Ascending aorta (tissue), 2 donors: ENCODE measurements at regions of chr20 and their contacts with region 1.

Region 1: GRCh38 chr20:49541733-49542513 is 26.0 kb downstream of the PTGIS start:
- DNase-seq: peak in 1 of 2 donors; percentile 84
- H3K4me3 ChIP-seq: no peak overlapping the region
- H3K27ac ChIP-seq: peak overlapping the region; percentile 73 to 84
- H3K4me1 ChIP-seq: peaks cover 0 to 15% of the 10 kb centered on the region in 2 donors
- H3K27me3 ChIP-seq: no peaks in the 10 kb centered on the region
- CTCF ChIP-seq: peak; percentile 91 to 96 (median 92)

Region 2: DNA sequence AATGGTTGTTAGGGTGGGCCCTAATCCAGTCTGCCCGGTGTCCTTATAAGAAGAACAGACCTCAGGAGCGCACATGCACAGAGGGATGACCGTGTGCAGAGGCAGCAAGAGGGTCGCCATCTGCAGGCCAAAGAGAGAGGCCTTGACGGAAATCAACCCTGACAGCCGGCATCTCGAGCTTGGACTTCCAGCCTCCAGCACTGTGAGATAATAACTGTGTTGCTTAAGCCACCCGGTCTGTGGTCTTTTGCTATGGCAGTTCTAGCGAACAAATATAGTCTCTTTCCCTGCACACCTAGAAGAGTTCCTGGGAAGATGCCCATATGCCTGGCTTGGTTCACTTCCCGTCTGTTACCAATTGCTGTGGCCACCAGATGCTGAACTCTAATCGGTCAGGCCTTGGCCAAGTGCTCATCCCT is 61.3 kb after region 1 on chr20:
- intact Hi-C with region 1: no loop called
- DNase-seq: no peak
- H3K4me3 ChIP-seq: no peak overlapping the region
- H3K27ac ChIP-seq: peak overlapping the region; percentile 23 to 34
- H3K4me1 ChIP-seq: peaks cover 6 to 15% of the 10 kb centered on the region in 2 donors
- H3K27me3 ChIP-seq: no peaks in the 10 kb centered on the region
- CTCF ChIP-seq: peak in 1 of 3 experiments; percentile 21

Region 3: DNA sequence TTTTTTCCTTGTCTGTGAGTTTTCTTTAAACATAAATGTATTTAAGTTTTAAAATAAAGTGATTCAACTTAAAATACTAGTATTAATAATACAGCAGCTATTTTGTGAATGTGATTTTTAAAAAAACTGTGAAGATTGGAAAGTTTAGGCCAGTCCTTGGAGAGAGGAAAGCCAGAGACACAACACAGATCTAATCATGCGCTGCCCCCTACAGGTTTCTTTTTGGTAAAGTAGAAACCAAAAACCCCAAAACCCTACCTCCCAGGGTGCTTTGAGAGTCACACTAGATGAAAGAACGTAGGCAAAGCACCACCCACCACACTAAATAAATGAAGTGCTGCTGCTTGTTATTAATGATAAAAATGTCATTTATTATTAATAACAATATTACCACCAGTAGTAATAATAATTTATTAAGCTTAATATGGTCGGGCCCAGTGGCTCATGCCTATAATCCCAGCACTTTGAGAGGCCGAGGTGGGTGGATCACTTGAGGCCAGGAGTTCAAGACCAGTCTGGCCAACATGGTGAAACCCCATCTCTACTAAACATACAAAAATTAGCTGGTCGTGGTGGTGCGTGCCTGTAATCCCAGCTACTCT is 304.4 kb after region 1 on chr20:
- intact Hi-C with region 1: loop called (anchors 5 kb)
- DNase-seq: no peak
- H3K4me3 ChIP-seq: no peak overlapping the region
- H3K27ac ChIP-seq: no peak overlapping the region
- H3K4me1 ChIP-seq: peaks cover 8 to 17% of the 10 kb centered on the region in 2 donors
- H3K27me3 ChIP-seq: no peaks in the 10 kb centered on the region
- CTCF ChIP-seq: peak; percentile 40 to 68 (median 44)

Region 4: GRCh38 chr20:49888345-49888966 is 346.5 kb after region 1 on chr20:
- intact Hi-C with region 1: loop called (anchors 5 kb)
- DNase-seq: no peak
- H3K4me3 ChIP-seq: no peak overlapping the region
- H3K27ac ChIP-seq: peak overlapping the region; percentile 79 to 84
- H3K4me1 ChIP-seq: peaks cover 16 to 33% of the 10 kb centered on the region in 2 donors
- H3K27me3 ChIP-seq: no peaks in the 10 kb centered on the region
- CTCF ChIP-seq: peak; percentile 68 to 84 (median 81)

Region 5: DNA sequence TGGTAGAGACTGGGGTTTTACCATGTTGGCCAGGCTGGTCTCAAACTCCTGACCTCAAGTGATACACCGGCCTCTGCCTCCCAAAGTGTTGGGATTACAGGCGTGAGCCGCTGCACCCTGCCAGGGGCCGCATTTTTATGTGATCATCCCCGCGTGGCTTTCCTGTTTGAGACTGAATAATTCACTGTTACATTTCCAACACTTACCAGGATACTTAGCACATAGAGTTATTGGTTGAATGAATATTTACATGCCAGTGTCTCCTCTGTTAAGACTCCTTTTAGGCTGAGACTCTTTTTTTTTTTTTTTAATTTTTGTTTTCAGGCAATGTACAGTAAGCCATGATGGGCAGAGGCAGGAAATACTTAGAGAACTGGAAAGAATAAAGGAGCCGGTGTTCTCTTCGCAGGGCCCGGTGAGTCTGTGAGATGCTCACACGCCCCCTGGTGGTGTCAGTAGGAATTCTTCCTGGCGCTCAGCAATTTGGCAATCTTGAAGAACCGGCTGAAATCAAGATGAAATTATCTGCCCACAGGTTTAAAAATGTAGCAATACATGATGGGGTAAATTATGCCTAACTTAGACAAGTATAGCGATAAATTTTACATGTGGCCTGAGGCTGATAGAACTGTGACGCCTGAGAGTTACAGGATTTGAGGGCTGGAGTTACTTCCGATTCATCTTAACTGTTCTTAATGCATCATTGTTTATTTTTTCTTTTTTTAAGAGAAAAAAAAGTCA is 386.6 kb after region 1 on chr20:
- intact Hi-C with region 1: loop called (anchors 5 kb)
- DNase-seq: peak in 1 of 2 donors; percentile 91
- H3K4me3 ChIP-seq: peak overlapping the region in 1 of 2 donors; percentile 27
- H3K27ac ChIP-seq: no peak overlapping the region
- H3K4me1 ChIP-seq: no peaks in the 10 kb centered on the region
- H3K27me3 ChIP-seq: no peaks in the 10 kb centered on the region
- CTCF ChIP-seq: peak; percentile 82 to 97 (median 88)

Region 6: GRCh38 chr20:49936153-49937027 is 394.5 kb after region 1 on chr20 and contains the start of gene RNF114:
- intact Hi-C with region 1: loop called (anchors 5 kb)
- DNase-seq: peak; percentile 44 to 94
- H3K4me3 ChIP-seq: peak within 1 kb of the TSS; percentile 86 to 91
- H3K27ac ChIP-seq: peak within 1 kb of the TSS; percentile 86 to 92
- H3K4me1 ChIP-seq: peaks cover 11 to 22% of the 10 kb centered on the region in 2 donors
- H3K27me3 ChIP-seq: no peaks in the 10 kb centered on the region
- CTCF ChIP-seq: peak in 1 of 3 experiments; percentile 20
- total RNA-seq, gene RNF114: 77.0 TPM